ENCODE measurements at regions of chr6 and their contacts with region 1.

Region 1: GRCh38 chr6:36504982-36505381 is 42.3 kb downstream of the STK38 start:
- DNase-seq: no peak
- H3K4me3 ChIP-seq: no peak overlapping the region
- H3K27ac ChIP-seq: no peak overlapping the region
- H3K4me1 ChIP-seq: no peaks in the 10 kb centered on the region
- H3K27me3 ChIP-seq: no peaks in the 10 kb centered on the region
- CTCF ChIP-seq: no peak
- EP300 ChIP-seq: no peak
- POLR2A ChIP-seq: no peak

Region 2: GRCh38 chr6:36290661-36291620 is 214.0 kb before region 1 on chr6:
- intact Hi-C with region 1: loop called in 1 of 4 experiments (anchors 5 kb)
- DNase-seq: no peak
- H3K4me3 ChIP-seq: no peak overlapping the region
- H3K27ac ChIP-seq: no peak overlapping the region
- H3K4me1 ChIP-seq: no peaks in the 10 kb centered on the region
- H3K27me3 ChIP-seq: no peaks in the 10 kb centered on the region
- CTCF ChIP-seq: no peak
- EP300 ChIP-seq: no peak
- POLR2A ChIP-seq: no peak